ENCODE measurements at regions of chr1 and their contacts with region 1.

Region 1: DNA sequence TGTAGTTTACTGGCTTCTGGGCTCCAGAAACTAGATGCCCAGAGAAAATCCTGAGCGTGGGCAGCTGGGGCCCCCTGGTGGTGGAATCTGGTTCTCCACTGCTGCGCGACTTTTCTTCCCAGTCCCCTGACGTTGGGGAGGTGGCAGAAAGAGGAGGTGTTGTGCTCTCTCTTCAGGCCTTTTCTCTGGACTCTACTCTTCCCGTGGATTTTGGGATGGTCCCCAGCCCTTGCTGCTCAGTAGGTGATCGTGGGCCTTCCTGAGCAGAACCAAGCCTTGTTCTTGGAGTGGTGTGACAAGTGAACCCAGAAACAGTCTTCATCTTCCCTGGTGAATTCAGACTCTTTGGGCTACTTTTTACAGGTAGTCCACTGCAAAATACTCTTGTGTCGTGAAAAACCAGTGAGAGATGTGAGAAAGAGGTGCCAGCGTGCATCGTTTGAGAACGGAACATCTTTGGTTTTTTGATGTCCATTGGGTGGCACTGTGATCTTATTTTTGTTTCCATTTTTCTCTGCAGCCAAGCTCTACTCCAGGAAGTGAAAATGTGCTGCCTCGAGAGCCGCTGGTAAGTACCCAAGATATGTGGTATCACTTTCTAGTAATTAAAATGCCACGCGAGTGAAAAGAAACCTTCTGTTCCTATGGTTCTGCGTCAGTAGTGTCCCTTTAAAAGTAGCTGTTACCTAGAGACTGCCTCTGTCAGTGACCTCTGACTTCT is 20.2 kb downstream of the PEX14 start:
- DNase-seq: peak; percentile 83 to 87 (median 84)
- ATAC-seq: peak; percentile 96
- H3K4me3 ChIP-seq: no peak overlapping the region
- H3K27ac ChIP-seq: no peak overlapping the region; the same call in 2 of the 3 replicates
- H3K4me1 ChIP-seq: peaks cover 0 to 3% of the 10 kb centered on the region in 2 experiments; a peak in 2 of 5 replicates
- H3K27me3 ChIP-seq: no peaks in the 10 kb centered on the region
- CTCF ChIP-seq: peak; percentile 94 to 97 (median 95)
- EP300 ChIP-seq: no peak
- POLR2A ChIP-seq: no peak
- RAD21 ChIP-seq: peak; percentile 85 to 93

Region 2: DNA sequence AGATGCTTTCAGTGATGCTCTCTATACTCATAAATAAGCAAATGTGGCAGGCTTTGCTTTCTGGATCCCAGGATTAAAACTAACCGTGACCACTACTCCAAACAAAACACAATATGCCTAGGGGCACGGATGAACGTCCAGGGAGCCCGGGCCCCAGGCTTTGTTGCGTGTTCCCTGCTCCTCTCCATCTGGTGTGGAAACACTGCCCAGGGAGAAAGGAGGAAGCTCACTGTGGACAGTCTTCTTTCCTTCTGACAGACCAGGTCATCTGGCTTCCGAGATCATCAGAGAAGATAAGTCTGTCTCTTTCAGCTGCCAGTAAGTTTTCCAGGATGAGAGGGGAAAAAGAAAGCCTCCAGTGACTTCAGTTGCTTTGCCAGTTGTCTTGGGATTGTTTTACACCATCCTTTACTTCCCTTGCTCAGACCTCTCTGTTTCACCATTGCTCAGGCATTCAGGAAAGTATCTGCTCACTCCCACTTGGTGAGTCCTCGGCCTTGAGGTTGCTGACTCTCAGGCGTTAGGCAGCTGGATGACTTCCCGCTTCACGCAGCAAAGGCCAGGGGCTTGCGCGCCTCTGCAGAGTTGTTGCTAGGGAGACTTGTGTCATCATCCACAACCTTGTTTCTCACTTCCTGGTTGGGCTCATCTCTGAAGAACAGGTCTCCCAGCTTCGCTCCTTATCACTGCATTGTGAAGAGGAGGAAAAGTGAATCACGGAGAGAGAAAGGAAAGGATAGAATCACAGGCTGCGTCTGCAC is 116.7 kb before region 1 on chr1:
- CTCF ChIA-PET with region 1: interaction called, 31 read pairs
- POLR2A ChIA-PET with region 1: interaction called, 4 read pairs
- in situ Hi-C with region 1: loop called (anchors 5 kb)
- intact Hi-C with region 1: loop called (anchors 1 kb)
- DNase-seq: peak; percentile 48 to 69 (median 56)
- ATAC-seq: peak; percentile 79
- H3K4me3 ChIP-seq: no peak overlapping the region
- H3K27ac ChIP-seq: peak overlapping the region; percentile 15; the same call in 1 of the 3 replicates
- H3K4me1 ChIP-seq: peaks cover 7 to 8% of the 10 kb centered on the region in 2 experiments; a peak in 4 of 5 replicates
- H3K27me3 ChIP-seq: no peaks in the 10 kb centered on the region
- CTCF ChIP-seq: no peak
- EP300 ChIP-seq: no peak
- POLR2A ChIP-seq: no peak
- RAD21 ChIP-seq: no peak

Region 3: GRCh38 chr1:10472220-10473144 is 22.4 kb before region 1 on chr1 and contains the start of gene DFFA:
- CTCF ChIA-PET with region 1: no interaction called
- POLR2A ChIA-PET with region 1: interaction called, 27 read pairs
- in situ Hi-C with region 1: no loop called
- intact Hi-C with region 1: loop called (anchors 2 kb)
- DNase-seq: peak; percentile 91 to 99 (median 92)
- ATAC-seq: peak; percentile 84
- H3K4me3 ChIP-seq: peak within 1 kb of the TSS; percentile 59
- H3K27ac ChIP-seq: peak within 1 kb of the TSS; percentile 90
- H3K4me1 ChIP-seq: peaks cover 24 to 26% of the 10 kb centered on the region in 2 experiments; a peak in 4 of 5 replicates
- H3K27me3 ChIP-seq: no peaks in the 10 kb centered on the region
- CTCF ChIP-seq: peak in 1 of 3 experiments; percentile 26; a peak in 2 of 6 replicates
- EP300 ChIP-seq: peak; percentile 43; the same call in 1 of the 2 replicates
- POLR2A ChIP-seq: peak; percentile 82
- RAD21 ChIP-seq: no peak
- polyA plus RNA-seq, gene DFFA: 59.2 to 71.7 TPM

Region 4: DNA sequence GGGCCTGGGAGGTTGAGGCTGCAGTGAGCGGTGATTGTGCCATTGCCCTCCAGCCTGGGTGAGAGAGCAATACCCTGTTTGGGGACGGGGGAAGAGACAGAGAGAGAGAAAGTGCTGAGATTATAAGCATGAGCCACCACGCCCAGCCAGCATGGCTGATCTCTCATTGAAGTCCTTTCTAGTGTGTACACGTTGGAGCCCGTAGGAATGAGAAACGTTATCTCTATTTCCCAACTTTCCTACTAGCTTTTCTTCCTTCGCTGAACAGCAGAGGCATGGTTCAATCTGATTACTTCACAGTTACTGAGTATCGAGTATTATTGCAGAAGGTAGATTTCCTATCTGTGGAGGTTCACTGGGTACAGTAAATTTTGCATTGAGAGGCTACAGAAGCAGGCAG is 15.6 kb before region 1 on chr1:
- CTCF ChIA-PET with region 1: no interaction called
- POLR2A ChIA-PET with region 1: interaction called, 27 read pairs
- in situ Hi-C with region 1: no loop called
- intact Hi-C with region 1: loop called (anchors 2 kb)
- DNase-seq: no peak
- ATAC-seq: no peak
- H3K4me3 ChIP-seq: no peak overlapping the region
- H3K27ac ChIP-seq: no peak overlapping the region
- H3K4me1 ChIP-seq: peaks cover 4 to 13% of the 10 kb centered on the region in 2 experiments; a peak in 3 of 5 replicates
- H3K27me3 ChIP-seq: no peaks in the 10 kb centered on the region
- CTCF ChIP-seq: no peak
- EP300 ChIP-seq: no peak
- POLR2A ChIP-seq: no peak
- RAD21 ChIP-seq: no peak

Measured in K562 (cell line).